Activated B cell treated with CpG ODN at 0.5 μM for 24 hours (primary cell): ENCODE measurements at regions of chr19 and their contacts with region 1.

Region 1: GRCh38 chr19:45092747-45093678 is at the start of gene PPP1R37:
- DNase-seq: peak; percentile 81
- ATAC-seq: peak; percentile 69
- H3K4me3 Mint-ChIP-seq: peak within 1 kb of the TSS; percentile 93
- H3K27ac Mint-ChIP-seq: peak within 1 kb of the TSS; percentile 99
- H3K4me1 Mint-ChIP-seq: peaks cover 54% of the 10 kb centered on the region
- H3K27me3 Mint-ChIP-seq: no peaks in the 10 kb centered on the region
- CTCF ChIP-seq: no peak
- total RNA-seq, gene PPP1R37: 18.8 and 27.2 TPM in 2 replicates

Region 2: GRCh38 chr19:44680536-44680935 is 412.5 kb before region 1 on chr19:
- CTCF ChIA-PET with region 1: no interaction called
- POLR2A ChIA-PET with region 1: no interaction called
- intact Hi-C with region 1: no loop called
- DNase-seq: no peak
- ATAC-seq: no peak
- H3K4me3 Mint-ChIP-seq: no peak overlapping the region
- H3K27ac Mint-ChIP-seq: no peak overlapping the region
- H3K4me1 Mint-ChIP-seq: peaks cover 7% of the 10 kb centered on the region
- H3K27me3 Mint-ChIP-seq: peaks cover 12% of the 10 kb centered on the region
- CTCF ChIP-seq: no peak

Region 3: GRCh38 chr19:44988896-44989556 is 104.0 kb before region 1 on chr19:
- CTCF ChIA-PET with region 1: no interaction called
- POLR2A ChIA-PET with region 1: no interaction called
- intact Hi-C with region 1: no loop called
- DNase-seq: peak; percentile 57
- ATAC-seq: peak; percentile 97
- H3K4me3 Mint-ChIP-seq: no peak overlapping the region
- H3K27ac Mint-ChIP-seq: no peak overlapping the region
- H3K4me1 Mint-ChIP-seq: no peaks in the 10 kb centered on the region
- H3K27me3 Mint-ChIP-seq: no peaks in the 10 kb centered on the region
- CTCF ChIP-seq: no peak

Region 4: DNA sequence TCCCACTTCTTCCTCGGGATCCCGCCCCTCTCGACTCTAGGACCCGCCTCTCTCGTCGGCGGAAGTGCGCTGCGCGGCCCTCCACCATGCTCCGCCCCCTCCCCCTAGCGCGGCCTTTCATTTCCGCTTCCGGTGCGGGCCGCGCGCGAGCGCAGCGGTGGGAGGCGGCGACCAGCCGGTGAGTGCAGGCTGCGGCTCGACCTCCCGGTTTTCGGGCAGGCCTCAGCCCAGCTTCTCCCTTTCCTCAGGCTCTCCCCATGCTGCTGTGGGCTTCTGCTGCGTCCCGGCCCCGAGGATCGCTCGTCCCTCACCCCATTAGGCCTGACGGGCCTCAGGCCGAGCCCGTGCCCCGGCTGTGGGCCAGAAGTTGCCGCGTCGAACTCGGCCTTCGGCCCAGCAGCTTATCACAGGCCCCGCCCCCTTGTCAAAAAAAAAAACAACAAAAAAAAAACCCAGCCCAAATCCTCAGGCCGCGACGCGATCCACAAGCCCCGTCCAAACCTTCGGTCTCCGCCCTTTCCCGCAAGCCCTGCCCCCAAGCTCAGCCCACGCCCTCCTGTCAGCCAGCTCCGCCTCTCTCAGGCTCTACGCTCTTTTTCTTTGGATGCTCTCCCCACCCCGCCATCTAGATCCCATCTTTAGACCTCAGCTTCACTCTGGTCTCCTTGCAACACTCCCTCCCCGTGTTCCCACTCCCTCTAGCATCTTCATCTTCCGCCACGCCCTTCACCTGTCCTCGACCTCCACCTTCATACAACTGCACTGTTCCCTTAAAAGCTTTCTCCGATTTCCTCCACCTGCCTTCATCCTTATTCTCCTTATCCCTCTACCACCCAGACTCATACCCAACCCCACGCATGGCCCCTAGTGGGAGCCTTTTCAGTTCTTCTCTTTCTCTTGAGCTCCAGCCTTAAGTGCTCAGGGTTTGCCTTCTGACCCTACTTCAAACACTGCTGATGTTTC is 53.8 kb before region 1 on chr19 and contains the start of gene CLASRP:
- CTCF ChIA-PET with region 1: no interaction called
- POLR2A ChIA-PET with region 1: interaction called, 5 read pairs
- intact Hi-C with region 1: loop called (anchors 5 kb)
- DNase-seq: peak; percentile 90
- ATAC-seq: peak; percentile 89
- H3K4me3 Mint-ChIP-seq: peak within 1 kb of the TSS; percentile 98
- H3K27ac Mint-ChIP-seq: peak within 1 kb of the TSS; percentile 91
- H3K4me1 Mint-ChIP-seq: peaks cover 38% of the 10 kb centered on the region
- H3K27me3 Mint-ChIP-seq: no peaks in the 10 kb centered on the region
- CTCF ChIP-seq: no peak
- total RNA-seq, gene CLASRP: 133 and 172 TPM in 2 replicates

Region 5: DNA sequence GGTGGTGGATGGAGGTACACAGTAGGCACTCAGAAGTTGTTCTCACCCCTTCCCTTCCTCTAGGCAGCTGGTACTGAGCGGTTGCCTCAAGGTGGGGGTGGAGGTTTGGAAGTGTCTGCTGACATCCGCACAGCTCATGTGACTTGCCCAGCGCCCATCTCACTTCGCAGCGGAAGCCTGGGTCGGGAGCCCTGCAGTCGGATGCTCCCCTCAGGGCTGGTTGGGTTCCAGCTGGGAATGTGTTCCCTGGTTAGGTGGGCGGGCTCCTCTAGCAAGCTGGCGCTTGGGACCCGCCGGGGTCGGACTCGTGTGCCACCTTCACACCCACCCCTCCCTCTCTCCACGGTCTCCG is 10.1 kb after region 1 on chr19:
- CTCF ChIA-PET with region 1: no interaction called
- POLR2A ChIA-PET with region 1: interaction called, 25 read pairs
- intact Hi-C with region 1: loop called (anchors 1 kb)
- DNase-seq: no peak
- ATAC-seq: peak; percentile 69
- H3K4me3 Mint-ChIP-seq: peak overlapping the region; percentile 57
- H3K27ac Mint-ChIP-seq: peak overlapping the region; percentile 77
- H3K4me1 Mint-ChIP-seq: peaks cover 65% of the 10 kb centered on the region
- H3K27me3 Mint-ChIP-seq: no peaks in the 10 kb centered on the region
- CTCF ChIP-seq: no peak

Region 6: DNA sequence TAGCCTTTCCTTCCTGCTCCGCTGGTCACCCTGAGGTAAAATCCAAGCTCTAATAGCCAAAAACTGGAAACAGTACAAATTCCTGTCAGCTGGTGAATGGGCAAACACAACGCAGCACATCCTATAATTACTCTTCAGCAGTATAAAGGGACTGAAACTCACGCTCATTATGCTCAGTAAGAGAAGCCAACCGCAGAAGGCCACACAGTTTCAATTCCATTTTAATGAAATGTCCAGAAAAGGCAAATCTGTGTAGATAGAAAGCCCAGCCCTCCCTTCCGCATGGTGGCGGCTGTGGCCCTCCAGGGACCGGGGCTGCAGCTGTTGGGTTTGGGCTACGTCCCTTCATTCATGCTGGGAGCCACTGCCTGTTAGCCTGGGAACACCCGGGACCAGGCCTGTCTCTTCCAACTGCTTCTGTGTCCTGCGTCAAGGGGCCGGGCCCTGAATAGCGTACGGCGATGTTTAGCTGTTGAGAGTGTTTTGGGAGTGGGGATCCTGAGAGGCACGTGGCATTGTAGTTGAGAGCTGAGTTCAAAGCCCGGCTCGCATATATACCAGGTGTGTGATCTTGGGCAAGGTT is 44.3 kb after region 1 on chr19:
- CTCF ChIA-PET with region 1: no interaction called
- POLR2A ChIA-PET with region 1: interaction called, 10 read pairs
- intact Hi-C with region 1: no loop called
- DNase-seq: no peak
- ATAC-seq: peak; percentile 85
- H3K4me3 Mint-ChIP-seq: peak overlapping the region; percentile 75
- H3K27ac Mint-ChIP-seq: peak overlapping the region; percentile 87
- H3K4me1 Mint-ChIP-seq: peaks cover 50% of the 10 kb centered on the region
- H3K27me3 Mint-ChIP-seq: no peaks in the 10 kb centered on the region
- CTCF ChIP-seq: no peak